ENCODE measurements at regions of chr17 and their contacts with region 1.

Region 1: GRCh38 chr17:73304971-73305812 is 6.6 kb downstream of the CDC42EP4 start:
- DNase-seq: peak; percentile 73 to 82
- H3K4me3 ChIP-seq: peak overlapping the region; percentile 36 to 53
- H3K27ac ChIP-seq: peak overlapping the region; percentile 97 to 98
- H3K4me1 ChIP-seq: peaks cover 0 to 93% (median 70%) of the 10 kb centered on the region in 4 donors
- H3K27me3 ChIP-seq: no peaks in the 10 kb centered on the region
- CTCF ChIP-seq: peak; percentile 21 to 23

Region 2: GRCh38 chr17:73092523-73093135 is 212.6 kb before region 1 on chr17 and contains the start of gene SLC39A11:
- intact Hi-C with region 1: loop called (anchors 10 kb)
- DNase-seq: peak; percentile 93 to 97
- H3K4me3 ChIP-seq: peak within 1 kb of the TSS; percentile 61 to 78
- H3K27ac ChIP-seq: peak within 1 kb of the TSS; percentile 81 to 84
- H3K4me1 ChIP-seq: peaks cover 0 to 59% (median 43%) of the 10 kb centered on the region in 4 donors
- H3K27me3 ChIP-seq: no peaks in the 10 kb centered on the region
- CTCF ChIP-seq: no peak